Uterus (tissue), 4 donors: ENCODE measurements at regions of chrX and their contacts with region 1.

Region 1: GRCh38 chrX:989959-990510 is 222.4 kb downstream of the CRLF2 start:
- DNase-seq: peak; percentile 82 to 95
- H3K4me3 ChIP-seq: peak overlapping the region; percentile 9 to 30
- H3K27ac ChIP-seq: peak overlapping the region; percentile 53 to 54
- H3K4me1 ChIP-seq: no peaks in the 10 kb centered on the region
- H3K27me3 ChIP-seq: no peaks in the 10 kb centered on the region
- CTCF ChIP-seq: no peak
- POLR2A ChIP-seq: no peak

Region 2: GRCh38 chrX:1274786-1275185 is 284.8 kb after region 1 on chrX:
- intact Hi-C with region 1: no loop called
- DNase-seq: no peak
- H3K4me3 ChIP-seq: no peak overlapping the region
- H3K27ac ChIP-seq: no peak overlapping the region
- H3K4me1 ChIP-seq: no peaks in the 10 kb centered on the region
- H3K27me3 ChIP-seq: no peaks in the 10 kb centered on the region
- CTCF ChIP-seq: no peak
- POLR2A ChIP-seq: no peak

Region 3: GRCh38 chrX:2325076-2325784 is 1335.2 kb after region 1 on chrX:
- intact Hi-C with region 1: loop called (anchors 10 kb)
- DNase-seq: peak; percentile 84 to 94
- H3K4me3 ChIP-seq: peak overlapping the region; percentile 39 to 45
- H3K27ac ChIP-seq: peak overlapping the region; percentile 74 to 77
- H3K4me1 ChIP-seq: no peaks in the 10 kb centered on the region
- H3K27me3 ChIP-seq: no peaks in the 10 kb centered on the region
- CTCF ChIP-seq: no peak
- POLR2A ChIP-seq: no peak